ENCODE measurements at regions of chr10 and their contacts with region 1.

Region 1: DNA sequence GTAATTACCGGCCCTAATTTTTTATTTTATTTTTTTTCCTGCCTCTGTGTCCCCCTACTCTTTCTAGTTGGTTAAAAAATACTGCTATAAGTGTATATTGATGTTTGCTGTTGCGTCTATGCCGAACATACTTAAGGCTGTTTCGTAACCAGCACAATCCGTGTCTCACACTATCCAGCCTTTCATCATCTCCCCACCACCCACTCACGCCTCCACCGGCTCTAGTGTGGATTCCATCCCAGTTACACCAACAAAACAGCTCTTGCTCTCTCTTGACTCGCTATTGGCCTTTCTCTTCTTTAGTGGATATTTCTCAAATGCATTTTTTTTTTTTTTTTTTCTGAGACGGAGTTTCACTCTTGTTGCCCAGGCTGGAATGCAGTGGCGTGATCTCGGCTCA is 70.1 kb upstream of the CAMK1D start:
- DNase-seq: no peak
- ATAC-seq: no peak
- H3K4me3 ChIP-seq: no peak overlapping the region
- H3K4me3 Mint-ChIP-seq: no peak overlapping the region
- H3K27ac ChIP-seq: no peak overlapping the region
- H3K27ac Mint-ChIP-seq: no peak overlapping the region
- H3K4me1 ChIP-seq: no peaks in the 10 kb centered on the region
- H3K4me1 Mint-ChIP-seq: no peaks in the 10 kb centered on the region
- H3K27me3 ChIP-seq: no peaks in the 10 kb centered on the region
- H3K27me3 Mint-ChIP-seq: no peaks in the 10 kb centered on the region
- CTCF ChIP-seq: no peak

Region 2: GRCh38 chr10:11921800-11922392 is 357.4 kb before region 1 on chr10:
- CTCF ChIA-PET with region 1: no interaction called
- POLR2A ChIA-PET with region 1: no interaction called
- intact Hi-C with region 1: no loop called
- DNase-seq: no peak
- ATAC-seq: no peak
- H3K4me3 ChIP-seq: no peak overlapping the region
- H3K4me3 Mint-ChIP-seq: no peak overlapping the region
- H3K27ac ChIP-seq: no peak overlapping the region
- H3K27ac Mint-ChIP-seq: peak overlapping the region; percentile 47
- H3K4me1 ChIP-seq: no peaks in the 10 kb centered on the region
- H3K4me1 Mint-ChIP-seq: no peaks in the 10 kb centered on the region
- H3K27me3 ChIP-seq: no peaks in the 10 kb centered on the region
- H3K27me3 Mint-ChIP-seq: no peaks in the 10 kb centered on the region
- CTCF ChIP-seq: no peak

Region 3: GRCh38 chr10:12212454-12212853 is 66.8 kb before region 1 on chr10:
- CTCF ChIA-PET with region 1: no interaction called
- POLR2A ChIA-PET with region 1: no interaction called
- intact Hi-C with region 1: no loop called
- DNase-seq: no peak
- ATAC-seq: no peak
- H3K4me3 ChIP-seq: no peak overlapping the region
- H3K4me3 Mint-ChIP-seq: no peak overlapping the region
- H3K27ac ChIP-seq: no peak overlapping the region
- H3K27ac Mint-ChIP-seq: no peak overlapping the region
- H3K4me1 ChIP-seq: no peaks in the 10 kb centered on the region
- H3K4me1 Mint-ChIP-seq: peaks cover 44% of the 10 kb centered on the region
- H3K27me3 ChIP-seq: no peaks in the 10 kb centered on the region
- H3K27me3 Mint-ChIP-seq: no peaks in the 10 kb centered on the region
- CTCF ChIP-seq: no peak

Region 4: DNA sequence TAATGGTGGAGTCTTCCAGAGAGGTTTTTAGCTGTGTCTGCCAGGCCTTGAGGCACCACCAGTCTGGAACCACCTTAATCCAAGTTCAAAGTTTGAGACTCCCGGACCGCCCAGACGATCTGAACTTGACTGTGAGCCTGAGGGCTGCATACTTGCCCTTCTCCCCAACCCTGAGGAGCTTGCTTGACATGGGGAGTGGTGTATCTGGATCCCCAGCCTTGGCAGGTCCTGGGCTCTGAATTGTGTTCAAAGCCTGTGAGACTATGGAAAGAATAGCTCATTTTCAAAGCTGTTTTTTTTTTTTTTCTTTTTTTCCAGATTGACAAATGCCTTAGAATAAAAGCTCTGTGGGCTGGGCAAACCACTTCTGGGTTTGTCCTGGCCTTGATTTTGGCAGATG is 47.8 kb after region 1 on chr10:
- CTCF ChIA-PET with region 1: no interaction called
- POLR2A ChIA-PET with region 1: no interaction called
- intact Hi-C with region 1: loop called in 1 of 2 experiments (anchors 5 kb)
- DNase-seq: no peak
- ATAC-seq: no peak
- H3K4me3 ChIP-seq: no peak overlapping the region
- H3K4me3 Mint-ChIP-seq: no peak overlapping the region
- H3K27ac ChIP-seq: no peak overlapping the region
- H3K27ac Mint-ChIP-seq: no peak overlapping the region
- H3K4me1 ChIP-seq: peaks cover 4% of the 10 kb centered on the region
- H3K4me1 Mint-ChIP-seq: peaks cover 10% of the 10 kb centered on the region
- H3K27me3 ChIP-seq: no peaks in the 10 kb centered on the region
- H3K27me3 Mint-ChIP-seq: no peaks in the 10 kb centered on the region
- CTCF ChIP-seq: no peak